ENCODE measurements at regions of chr1 and their contacts with region 1.

Region 1: DNA sequence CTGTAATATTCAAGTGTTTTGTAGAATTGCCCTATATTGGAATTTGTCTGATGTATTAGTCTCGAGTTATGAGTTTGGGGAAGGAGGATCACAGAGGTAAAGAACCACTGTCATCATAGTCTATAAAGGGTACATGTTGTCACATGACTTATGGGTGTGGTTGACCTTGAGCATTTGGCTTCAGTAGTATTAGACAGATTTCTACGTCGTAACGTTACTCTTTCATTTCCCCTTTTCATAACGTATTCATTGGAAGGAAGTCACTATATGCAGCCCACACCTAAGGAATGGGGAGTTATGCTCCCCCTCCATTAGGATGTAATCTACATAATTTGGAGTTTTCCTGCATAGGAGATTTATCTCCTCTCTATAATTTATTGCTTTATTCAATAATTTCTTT is 110.1 kb upstream of the VAV3 start:
- DNase-seq: peak; percentile 88
- ATAC-seq: peak; percentile 79
- H3K4me3 ChIP-seq: no peak overlapping the region
- H3K4me3 Mint-ChIP-seq: peak overlapping the region; percentile 42
- H3K27ac ChIP-seq: peak overlapping the region; percentile 67 to 71
- H3K27ac Mint-ChIP-seq: peak overlapping the region; percentile 80
- H3K4me1 ChIP-seq: peaks cover 44 to 57% of the 10 kb centered on the region in 2 donors
- H3K4me1 Mint-ChIP-seq: peaks cover 62% of the 10 kb centered on the region
- H3K27me3 ChIP-seq: no peaks in the 10 kb centered on the region
- H3K27me3 Mint-ChIP-seq: no peaks in the 10 kb centered on the region
- CTCF ChIP-seq: no peak

Region 2: DNA sequence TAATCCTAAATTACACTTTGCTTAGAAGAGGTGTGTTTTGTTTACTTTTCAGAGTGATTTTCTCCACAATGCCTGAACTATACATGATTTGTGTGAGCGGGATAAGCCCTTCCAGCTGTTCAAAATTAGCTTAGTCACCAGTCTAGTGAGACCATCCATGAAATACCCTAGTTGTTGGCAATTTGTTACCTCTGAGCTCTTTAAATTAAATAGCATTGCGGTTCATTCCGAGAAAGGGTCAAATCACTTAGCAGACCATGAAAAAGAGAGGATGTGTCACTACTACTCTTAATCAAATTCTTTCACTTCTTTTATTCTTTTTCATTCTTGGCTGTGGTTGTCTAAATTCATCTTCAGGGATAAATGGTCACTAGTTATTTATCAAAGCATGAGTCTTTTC is 98.2 kb before region 1 on chr1:
- CTCF ChIA-PET with region 1: no interaction called
- POLR2A ChIA-PET with region 1: no interaction called
- intact Hi-C with region 1: loop called (anchors 5 kb)
- DNase-seq: no peak
- ATAC-seq: no peak
- H3K4me3 ChIP-seq: no peak overlapping the region
- H3K4me3 Mint-ChIP-seq: no peak overlapping the region
- H3K27ac ChIP-seq: no peak overlapping the region
- H3K27ac Mint-ChIP-seq: no peak overlapping the region
- H3K4me1 ChIP-seq: peaks cover 0 to 5% of the 10 kb centered on the region in 2 donors
- H3K4me1 Mint-ChIP-seq: peaks cover 29% of the 10 kb centered on the region
- H3K27me3 ChIP-seq: no peaks in the 10 kb centered on the region
- H3K27me3 Mint-ChIP-seq: no peaks in the 10 kb centered on the region
- CTCF ChIP-seq: no peak

Region 3: DNA sequence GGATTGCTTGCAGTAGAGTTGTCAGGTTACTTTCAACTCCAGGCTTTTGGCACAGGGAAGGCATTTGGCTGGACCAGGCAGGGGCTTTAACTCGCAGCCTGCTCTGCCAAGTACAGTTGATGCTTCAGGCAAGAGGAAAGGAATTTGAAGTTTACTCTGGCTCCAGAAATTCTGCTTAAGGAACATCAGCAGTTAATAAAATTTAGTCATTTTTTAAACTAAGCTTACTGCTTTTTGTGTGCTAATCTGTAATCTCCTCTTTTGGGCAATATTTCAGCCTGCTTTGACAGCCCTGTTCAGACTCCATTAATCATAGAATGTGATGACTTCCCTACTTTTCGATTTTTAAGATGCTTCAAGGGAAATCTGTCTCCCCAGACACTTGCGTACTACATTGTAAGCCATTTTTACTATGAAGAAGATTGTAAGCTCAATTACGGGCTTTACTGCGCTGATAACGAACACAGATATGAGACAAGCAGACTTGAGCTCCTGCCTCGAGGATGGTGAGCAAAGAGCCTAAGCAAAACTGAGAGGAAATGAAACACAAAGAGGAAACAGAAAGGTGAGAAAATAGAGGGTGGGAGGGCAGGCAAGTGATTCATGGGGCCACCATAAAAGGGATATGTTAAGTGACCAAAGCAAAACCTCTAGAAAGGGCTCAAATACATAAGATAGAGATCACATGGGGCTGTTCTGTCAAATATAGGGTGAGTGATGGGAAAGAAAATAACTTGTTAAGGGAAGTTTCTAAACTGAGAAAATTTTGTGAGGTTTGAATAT is 33.5 kb before region 1 on chr1:
- CTCF ChIA-PET with region 1: no interaction called
- POLR2A ChIA-PET with region 1: no interaction called
- intact Hi-C with region 1: loop called (anchors 2 kb)
- DNase-seq: peak; percentile 68
- ATAC-seq: peak; percentile 60
- H3K4me3 ChIP-seq: peak overlapping the region in 1 of 5 experiments; percentile 25
- H3K4me3 Mint-ChIP-seq: peak overlapping the region; percentile 67
- H3K27ac ChIP-seq: peak overlapping the region; percentile 61 to 80
- H3K27ac Mint-ChIP-seq: peak overlapping the region; percentile 79
- H3K4me1 ChIP-seq: peaks cover 34 to 37% of the 10 kb centered on the region in 2 donors
- H3K4me1 Mint-ChIP-seq: peaks cover 38% of the 10 kb centered on the region
- H3K27me3 ChIP-seq: no peaks in the 10 kb centered on the region
- H3K27me3 Mint-ChIP-seq: no peaks in the 10 kb centered on the region
- CTCF ChIP-seq: no peak

Region 4: GRCh38 chr1:108057541-108057940 is 17.5 kb before region 1 on chr1:
- CTCF ChIA-PET with region 1: no interaction called
- POLR2A ChIA-PET with region 1: no interaction called
- intact Hi-C with region 1: no loop called
- DNase-seq: no peak
- ATAC-seq: no peak
- H3K4me3 ChIP-seq: no peak overlapping the region
- H3K4me3 Mint-ChIP-seq: no peak overlapping the region
- H3K27ac ChIP-seq: no peak overlapping the region
- H3K27ac Mint-ChIP-seq: no peak overlapping the region
- H3K4me1 ChIP-seq: no peaks in the 10 kb centered on the region
- H3K4me1 Mint-ChIP-seq: peaks cover under 1% of the 10 kb centered on the region
- H3K27me3 ChIP-seq: no peaks in the 10 kb centered on the region
- H3K27me3 Mint-ChIP-seq: no peaks in the 10 kb centered on the region
- CTCF ChIP-seq: no peak